ENCODE measurements at regions of chr10 and their contacts with region 1.

Region 1: DNA sequence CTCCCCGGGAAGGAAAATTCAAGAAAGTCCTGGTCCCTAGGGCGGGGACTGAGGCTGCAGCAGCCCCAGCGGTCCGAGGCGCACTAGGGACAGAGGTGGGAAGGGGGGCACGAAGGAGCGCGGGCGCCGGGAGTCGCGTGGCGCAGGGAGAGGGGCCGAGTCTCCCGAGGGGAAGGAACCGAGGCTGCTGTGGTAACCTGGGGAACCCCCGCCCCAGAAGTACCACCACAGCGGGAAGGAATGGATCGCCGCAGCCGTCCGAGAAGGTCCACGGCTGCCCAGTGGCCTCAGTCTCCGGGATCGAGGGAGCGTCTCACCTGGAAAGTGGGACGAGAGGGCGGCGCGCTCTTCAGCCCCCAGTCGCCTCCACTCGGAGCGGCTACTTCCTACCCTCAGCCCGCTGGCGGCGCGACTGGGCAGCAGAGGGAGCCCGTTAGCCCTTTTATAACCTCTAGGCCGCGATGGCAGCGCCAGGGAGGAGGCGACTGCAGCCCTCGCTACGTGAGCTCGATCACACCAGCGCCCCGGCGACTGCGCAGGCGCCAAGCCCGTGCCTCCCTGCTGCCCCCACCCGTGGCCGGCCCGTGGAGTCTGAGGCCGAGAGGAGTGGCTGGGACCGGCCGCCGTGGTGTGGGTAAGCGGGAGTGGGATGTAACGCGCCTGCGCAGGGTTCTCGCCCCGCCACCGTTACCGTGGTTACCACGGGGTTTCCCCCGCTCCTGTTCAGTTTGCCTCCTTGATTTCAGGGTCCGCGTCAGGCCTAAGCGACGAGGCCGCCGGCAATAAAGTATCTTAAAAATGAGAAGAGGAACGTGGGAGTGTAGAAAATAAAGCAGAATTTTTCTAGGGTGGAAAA is at the start of gene P4HA1:
- DNase-seq: peak; percentile 98 to 99 (median 98)
- H3K4me3 ChIP-seq: peak within 1 kb of the TSS; percentile 82 to 99 (median 91)
- H3K27ac ChIP-seq: peak within 1 kb of the TSS; percentile 88 to 96
- H3K4me1 ChIP-seq: peaks cover 3 to 28% (median 18%) of the 10 kb centered on the region in 4 experiments
- H3K27me3 ChIP-seq: no peaks in the 10 kb centered on the region

Region 2: DNA sequence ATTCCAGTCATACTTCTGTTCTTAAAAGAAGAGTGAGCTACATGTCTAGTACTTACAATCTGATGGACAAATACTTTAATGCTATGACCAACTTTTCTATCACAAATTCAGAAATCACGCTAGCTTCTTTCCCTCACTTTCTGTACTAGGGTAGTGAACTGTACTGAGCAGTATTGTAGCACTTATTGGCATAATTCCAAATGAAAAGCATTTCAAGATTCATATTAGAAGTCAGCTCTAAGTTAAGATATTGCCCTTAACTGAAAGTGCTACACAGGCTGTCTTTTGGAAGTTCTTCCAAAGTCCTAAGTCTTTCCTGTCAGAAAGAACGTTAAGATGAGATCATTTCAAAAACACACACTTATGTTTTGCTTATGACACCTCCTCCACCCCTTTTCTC is 13.5 kb before region 1 on chr10:
- CTCF ChIA-PET with region 1: interaction called, 11 read pairs
- POLR2A ChIA-PET with region 1: no interaction called
- DNase-seq: no peak
- H3K4me3 ChIP-seq: no peak overlapping the region
- H3K27ac ChIP-seq: no peak overlapping the region
- H3K4me1 ChIP-seq: no peaks in the 10 kb centered on the region
- H3K27me3 ChIP-seq: no peaks in the 10 kb centered on the region

Region 3: DNA sequence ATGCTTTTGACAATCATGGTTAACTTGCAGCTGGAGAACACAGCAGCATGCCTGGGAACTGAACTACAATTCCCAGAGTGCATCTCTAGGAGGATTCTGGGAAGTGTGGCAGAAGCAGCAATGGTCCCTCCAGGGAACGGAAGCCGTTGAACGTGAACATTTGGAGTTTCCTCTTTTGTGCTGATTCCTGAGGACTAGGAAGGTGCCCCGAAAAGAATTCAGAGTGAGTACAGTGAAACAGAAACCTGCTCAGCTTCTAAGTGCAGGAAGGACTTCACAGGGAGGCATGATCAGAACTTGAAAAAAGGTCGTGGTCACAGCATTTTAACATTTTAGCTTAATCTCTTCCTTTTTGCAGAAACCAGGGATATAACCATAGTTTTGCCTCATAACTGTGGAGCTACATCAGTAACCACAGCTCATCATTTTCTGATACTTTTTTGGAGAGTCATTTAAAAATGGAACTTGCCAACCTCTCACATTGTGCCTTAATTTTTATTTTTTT is 13.7 kb after region 1 on chr10 and contains the start of gene NUDT13:
- CTCF ChIA-PET with region 1: interaction called, 22 read pairs
- POLR2A ChIA-PET with region 1: interaction called, 13 read pairs
- DNase-seq: peak; percentile 85 to 88 (median 88)
- H3K4me3 ChIP-seq: peak within 1 kb of the TSS in 6 of 7 experiments; percentile 67 to 87 (median 75)
- H3K27ac ChIP-seq: peak within 1 kb of the TSS; percentile 61 to 82
- H3K4me1 ChIP-seq: peaks cover 0 to 8% (median 5%) of the 10 kb centered on the region in 4 experiments
- H3K27me3 ChIP-seq: no peaks in the 10 kb centered on the region

Region 4: GRCh38 chr10:73136627-73137026 is 40.0 kb after region 1 on chr10:
- CTCF ChIA-PET with region 1: interaction called, 14 read pairs
- POLR2A ChIA-PET with region 1: no interaction called
- DNase-seq: no peak
- H3K4me3 ChIP-seq: no peak overlapping the region
- H3K27ac ChIP-seq: no peak overlapping the region
- H3K4me1 ChIP-seq: no peaks in the 10 kb centered on the region
- H3K27me3 ChIP-seq: no peaks in the 10 kb centered on the region

Region 5: GRCh38 chr10:73159038-73159648 is 62.5 kb after region 1 on chr10:
- CTCF ChIA-PET with region 1: interaction called, 19 read pairs
- POLR2A ChIA-PET with region 1: interaction called, 6 read pairs
- DNase-seq: peak; percentile 60 to 72 (median 60)
- H3K4me3 ChIP-seq: no peak overlapping the region
- H3K27ac ChIP-seq: peak overlapping the region in 1 of 2 experiments; percentile 32
- H3K4me1 ChIP-seq: no peaks in the 10 kb centered on the region
- H3K27me3 ChIP-seq: no peaks in the 10 kb centered on the region

Region 6: DNA sequence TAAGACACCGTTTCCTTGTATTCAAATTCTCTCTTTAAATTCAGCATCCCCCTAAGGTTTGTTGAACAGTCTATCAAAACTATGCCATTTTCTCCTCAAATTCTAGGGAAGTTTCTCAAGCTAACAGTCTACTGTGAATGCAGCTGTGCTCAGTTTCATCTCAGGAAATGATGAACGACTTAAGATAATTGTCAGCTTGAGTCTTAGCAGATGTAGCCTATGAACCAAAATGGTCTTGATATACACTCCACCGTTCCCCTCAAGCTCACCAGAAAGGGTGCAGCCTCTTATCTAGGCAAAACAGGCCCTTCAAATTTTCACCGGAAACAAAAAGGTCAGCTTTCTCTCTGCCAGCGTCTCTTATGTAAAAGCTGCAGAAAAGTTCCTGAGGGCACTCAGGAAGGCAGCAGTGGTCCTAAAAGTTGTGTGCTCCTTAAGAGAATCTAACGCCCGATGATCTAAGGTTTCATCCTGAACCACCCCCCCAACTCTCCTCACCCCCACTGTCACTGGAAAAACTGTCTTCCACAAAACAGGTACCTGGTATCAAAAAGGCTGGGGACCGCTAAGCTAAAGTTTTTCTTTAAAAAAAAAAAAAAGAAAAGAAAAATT is 148.3 kb after region 1 on chr10:
- CTCF ChIA-PET with region 1: no interaction called
- POLR2A ChIA-PET with region 1: no interaction called
- DNase-seq: peak; percentile 65 to 91 (median 84)
- H3K4me3 ChIP-seq: peak overlapping the region in 5 of 7 experiments; percentile 39 to 97 (median 94)
- H3K27ac ChIP-seq: peak overlapping the region; percentile 37 to 88
- H3K4me1 ChIP-seq: peaks cover 28 to 46% (median 39%) of the 10 kb centered on the region in 4 experiments
- H3K27me3 ChIP-seq: no peaks in the 10 kb centered on the region

Region 7: GRCh38 chr10:73332221-73332778 is 235.6 kb after region 1 on chr10:
- CTCF ChIA-PET with region 1: no interaction called
- POLR2A ChIA-PET with region 1: no interaction called
- DNase-seq: no peak
- H3K4me3 ChIP-seq: no peak overlapping the region
- H3K27ac ChIP-seq: no peak overlapping the region
- H3K4me1 ChIP-seq: no peaks in the 10 kb centered on the region
- H3K27me3 ChIP-seq: no peaks in the 10 kb centered on the region

Measured in common myeloid progenitor, CD34-positive (primary cell).